Naive thymus-derived CD4-positive, alpha-beta T cell (primary cell): ENCODE measurements at regions of chr7 and their contacts with region 1.

Region 1: DNA sequence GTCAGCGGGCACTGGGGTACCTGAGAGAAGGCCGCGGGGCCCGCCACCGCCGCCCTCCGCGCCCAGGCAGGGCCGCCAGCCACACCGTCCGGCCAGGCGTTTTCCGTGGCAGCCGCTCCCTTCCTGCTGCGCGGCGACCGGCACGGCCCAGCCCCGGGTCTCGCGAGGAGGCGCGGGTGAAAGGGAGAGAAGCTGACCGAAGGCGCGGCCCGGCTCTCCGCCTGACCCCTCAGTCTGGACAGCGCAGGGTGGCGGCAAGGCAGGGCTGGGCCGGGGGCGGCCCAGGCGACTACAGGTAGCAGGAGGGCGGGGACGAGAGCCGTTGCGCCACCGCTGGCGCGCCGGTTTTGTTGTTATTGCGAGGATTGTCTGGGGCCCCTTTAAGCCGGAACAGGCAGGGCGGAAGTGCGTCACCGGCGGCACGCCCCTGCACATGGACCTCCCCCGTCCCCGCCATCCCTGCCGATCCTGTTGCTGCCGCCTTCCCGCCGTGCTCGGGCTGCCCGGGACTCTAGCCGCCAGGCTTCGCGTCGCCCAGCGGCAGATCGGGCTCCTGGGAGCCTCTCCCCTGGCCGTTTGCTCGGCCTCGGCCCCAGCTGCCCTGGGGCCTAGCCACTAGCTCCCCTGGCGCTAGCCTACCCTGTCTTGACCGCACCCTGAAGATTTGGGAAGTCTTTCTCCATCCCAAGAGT is at the start of gene HERPUD2:
- DNase-seq: peak; percentile 89 to 94 (median 93)
- ATAC-seq: peak; percentile 92
- H3K4me3 ChIP-seq: peak within 1 kb of the TSS; percentile 92
- H3K4me3 Mint-ChIP-seq: peak within 1 kb of the TSS; percentile 88 to 99 (median 97)
- H3K27ac ChIP-seq: peak within 1 kb of the TSS; percentile 98
- H3K27ac Mint-ChIP-seq: peak within 1 kb of the TSS; percentile 93 to 100 (median 98)
- H3K4me1 ChIP-seq: peaks cover 16 to 18% of the 10 kb centered on the region in 2 donors
- H3K4me1 Mint-ChIP-seq: peaks cover 47 to 62% (median 57%) of the 10 kb centered on the region in 7 donors
- H3K27me3 ChIP-seq: no peaks in the 10 kb centered on the region
- H3K27me3 Mint-ChIP-seq: no peaks in the 10 kb centered on the region
- total RNA-seq, gene HERPUD2: 38.1 to 92.6 (median 62.4) TPM

Region 2: GRCh38 chr7:35003679-35004303 is 691.1 kb before region 1 on chr7:
- CTCF ChIA-PET with region 1: no interaction called
- POLR2A ChIA-PET with region 1: no interaction called
- intact Hi-C with region 1: no loop called
- DNase-seq: no peak
- ATAC-seq: no peak
- H3K4me3 ChIP-seq: no peak overlapping the region
- H3K4me3 Mint-ChIP-seq: no peak overlapping the region
- H3K27ac ChIP-seq: no peak overlapping the region
- H3K27ac Mint-ChIP-seq: no peak overlapping the region
- H3K4me1 ChIP-seq: no peaks in the 10 kb centered on the region
- H3K4me1 Mint-ChIP-seq: no peaks in the 10 kb centered on the region
- H3K27me3 ChIP-seq: no peaks in the 10 kb centered on the region
- H3K27me3 Mint-ChIP-seq: no peaks in the 10 kb centered on the region

Region 3: DNA sequence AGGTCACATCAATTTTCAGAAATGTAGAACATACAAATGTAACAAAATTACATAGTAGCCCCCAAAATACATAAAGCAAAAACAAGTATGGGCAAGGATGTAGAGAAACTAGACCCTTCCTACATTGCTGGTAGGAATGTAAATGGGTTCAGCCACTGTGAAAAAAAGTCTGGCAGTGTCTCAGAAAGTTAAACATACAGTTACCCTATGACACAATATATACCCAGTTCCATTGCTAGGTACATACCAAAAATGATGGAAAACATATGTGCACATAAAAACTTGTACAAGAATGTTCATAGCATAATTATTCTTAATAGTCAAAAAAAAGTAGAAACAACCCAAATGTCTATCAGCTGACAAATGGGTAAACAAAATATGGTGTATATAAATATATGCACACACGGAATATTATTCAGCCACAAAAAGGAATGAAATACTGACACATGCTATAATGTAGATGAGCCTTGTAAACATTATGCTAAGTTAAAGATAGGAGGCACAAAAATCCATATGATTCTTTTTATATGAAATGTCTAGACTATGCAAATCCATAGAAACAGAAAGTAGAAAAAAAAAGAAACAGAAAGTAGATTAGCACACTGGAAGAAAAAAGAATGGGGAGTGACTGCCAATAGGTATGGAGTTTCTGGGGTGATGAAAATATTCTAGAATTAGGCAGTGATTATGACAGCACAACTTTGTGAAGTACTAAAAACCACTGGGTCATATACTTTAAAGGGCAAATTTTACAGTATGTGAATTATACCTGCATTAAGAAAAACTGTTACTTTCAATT is 13.5 kb before region 1 on chr7:
- CTCF ChIA-PET with region 1: no interaction called
- POLR2A ChIA-PET with region 1: interaction called, 6 read pairs
- intact Hi-C with region 1: loop called (anchors 1 to 2 kb)
- DNase-seq: no peak
- ATAC-seq: no peak
- H3K4me3 ChIP-seq: no peak overlapping the region
- H3K4me3 Mint-ChIP-seq: peak overlapping the region in 8 of 10 donors; percentile 0 to 41 (median 21)
- H3K27ac ChIP-seq: no peak overlapping the region
- H3K27ac Mint-ChIP-seq: peak overlapping the region in 1 of 9 donors; percentile 34
- H3K4me1 ChIP-seq: peaks cover 22 to 27% of the 10 kb centered on the region in 2 donors
- H3K4me1 Mint-ChIP-seq: peaks cover 46 to 82% (median 74%) of the 10 kb centered on the region in 7 donors
- H3K27me3 ChIP-seq: no peaks in the 10 kb centered on the region
- H3K27me3 Mint-ChIP-seq: no peaks in the 10 kb centered on the region

Region 4: GRCh38 chr7:35729061-35729783 is 34.3 kb after region 1 on chr7:
- CTCF ChIA-PET with region 1: interaction called, 4 read pairs
- POLR2A ChIA-PET with region 1: interaction called, 6 read pairs
- intact Hi-C with region 1: loop called (anchors 1 to 2 kb)
- DNase-seq: peak in 1 of 9 donors; percentile 37
- ATAC-seq: peak; percentile 79
- H3K4me3 ChIP-seq: no peak overlapping the region
- H3K4me3 Mint-ChIP-seq: peak overlapping the region in 2 of 10 donors; percentile 21 to 53
- H3K27ac ChIP-seq: no peak overlapping the region
- H3K27ac Mint-ChIP-seq: peak overlapping the region in 4 of 9 donors; percentile 26 to 73 (median 45)
- H3K4me1 ChIP-seq: peaks cover 26 to 55% of the 10 kb centered on the region in 2 donors
- H3K4me1 Mint-ChIP-seq: peaks cover 23 to 54% (median 47%) of the 10 kb centered on the region in 7 donors
- H3K27me3 ChIP-seq: no peaks in the 10 kb centered on the region
- H3K27me3 Mint-ChIP-seq: peaks cover 0 to 19% (median 0%) of the 10 kb centered on the region in 5 donors

Region 5: DNA sequence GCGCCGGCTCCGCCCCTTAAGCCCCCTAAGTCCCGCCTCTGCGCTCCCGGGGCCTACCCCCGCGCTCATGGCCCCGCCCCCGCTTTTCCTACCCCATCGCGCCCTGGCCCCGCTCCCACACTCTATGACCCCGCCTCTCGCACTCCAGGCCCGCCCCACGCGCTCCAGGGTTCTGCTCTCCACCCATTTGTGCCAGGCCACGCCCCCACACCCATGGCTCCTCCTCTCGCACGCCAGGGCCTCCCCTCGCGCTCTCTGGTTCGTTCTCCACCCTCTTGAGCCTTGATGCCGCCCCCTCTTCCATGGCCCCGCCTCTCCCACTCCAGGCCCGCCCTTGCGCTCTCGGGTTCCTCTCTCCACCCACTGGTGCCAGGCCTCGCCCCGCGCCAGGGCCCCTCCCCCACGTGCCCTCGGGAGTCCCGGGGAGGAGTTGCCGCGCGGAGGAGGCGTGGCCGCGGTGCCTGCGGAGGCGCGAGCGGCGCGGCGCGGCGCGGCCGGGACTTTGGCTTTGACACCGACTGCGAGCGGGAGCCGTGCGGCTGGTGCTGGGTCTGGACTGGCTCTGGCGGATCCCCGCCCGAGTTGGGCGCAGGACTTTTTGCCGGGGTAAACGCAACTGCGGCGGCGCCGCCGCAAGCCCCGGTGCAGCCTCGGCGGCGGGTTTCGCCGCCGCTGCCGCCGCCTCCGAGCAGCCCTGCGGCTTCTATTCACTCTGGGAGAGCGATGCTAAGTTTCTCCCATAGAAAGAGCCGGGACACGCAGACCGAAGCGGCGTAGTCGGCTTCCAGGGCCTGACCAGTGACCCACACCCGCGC is 458.0 kb after region 1 on chr7 and contains the start of gene EEPD1:
- CTCF ChIA-PET with region 1: no interaction called
- POLR2A ChIA-PET with region 1: no interaction called
- intact Hi-C with region 1: loop called (anchors 1 kb)
- DNase-seq: peak; percentile 99 to 100 (median 100)
- ATAC-seq: peak; percentile 96
- H3K4me3 ChIP-seq: peak within 1 kb of the TSS; percentile 72
- H3K4me3 Mint-ChIP-seq: peak within 1 kb of the TSS; percentile 70 to 93 (median 84)
- H3K27ac ChIP-seq: peak within 1 kb of the TSS; percentile 73
- H3K27ac Mint-ChIP-seq: peak within 1 kb of the TSS in 8 of 9 donors; percentile 10 to 87 (median 74)
- H3K4me1 ChIP-seq: peaks cover 7 to 16% of the 10 kb centered on the region in 2 donors
- H3K4me1 Mint-ChIP-seq: peaks cover 12 to 31% (median 24%) of the 10 kb centered on the region in 7 donors
- H3K27me3 ChIP-seq: no peaks in the 10 kb centered on the region
- H3K27me3 Mint-ChIP-seq: peaks cover 0 to 21% (median 0%) of the 10 kb centered on the region in 5 donors
- total RNA-seq, gene EEPD1: 2.2 to 13.2 (median 3.7) TPM

Region 6: DNA sequence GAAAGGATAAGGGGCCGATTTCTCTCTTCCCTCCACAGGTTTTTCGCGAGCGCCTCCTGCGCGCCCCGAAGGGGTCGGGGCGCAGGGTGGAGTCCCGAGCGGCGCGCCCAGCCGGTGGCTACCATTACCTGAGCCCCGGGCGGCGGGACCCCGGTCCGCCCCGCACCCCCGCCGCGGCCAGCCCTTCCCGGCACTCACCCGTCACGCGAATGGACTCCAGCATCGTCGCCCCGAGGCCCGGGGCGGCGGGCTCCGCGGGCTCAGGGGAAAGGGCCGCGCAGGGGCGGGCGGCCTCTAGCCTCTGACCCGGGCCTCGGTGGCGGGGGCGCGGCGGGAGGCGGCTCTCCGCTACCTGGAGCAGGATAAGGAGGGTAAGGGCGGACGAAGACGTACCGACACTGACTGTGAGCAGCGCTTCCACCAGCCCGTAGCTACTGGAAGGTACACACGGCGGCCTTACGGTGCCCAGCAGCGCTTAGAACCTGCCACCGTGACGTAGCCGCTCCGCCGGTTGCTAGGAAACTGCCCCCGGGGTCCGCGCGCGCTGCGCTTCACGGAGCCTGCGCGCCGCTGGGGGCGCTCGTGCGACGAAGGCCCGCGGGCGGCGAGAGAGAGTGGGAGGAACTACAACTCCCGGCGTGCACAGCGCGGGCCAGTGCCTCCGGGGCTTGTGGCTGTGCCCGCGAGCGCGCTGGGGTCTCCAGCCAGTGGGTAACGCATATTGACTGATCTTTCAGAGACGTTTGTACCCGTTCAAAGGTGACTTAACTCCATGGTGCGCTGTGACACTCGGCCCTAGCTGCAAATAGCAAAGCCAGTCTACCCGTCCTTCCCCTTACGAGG is 672.0 kb after region 1 on chr7:
- CTCF ChIA-PET with region 1: no interaction called
- POLR2A ChIA-PET with region 1: no interaction called
- intact Hi-C with region 1: loop called (anchors 2 to 10 kb)
- DNase-seq: peak; percentile 84 to 92 (median 91)
- ATAC-seq: peak; percentile 98
- H3K4me3 ChIP-seq: peak overlapping the region; percentile 76
- H3K4me3 Mint-ChIP-seq: peak overlapping the region; percentile 80 to 97 (median 93)
- H3K27ac ChIP-seq: peak overlapping the region; percentile 70
- H3K27ac Mint-ChIP-seq: peak overlapping the region in 8 of 9 donors; percentile 51 to 94 (median 82)
- H3K4me1 ChIP-seq: peaks cover 0 to 5% of the 10 kb centered on the region in 2 donors
- H3K4me1 Mint-ChIP-seq: peaks cover 0 to 8% (median 5%) of the 10 kb centered on the region in 7 donors
- H3K27me3 ChIP-seq: no peaks in the 10 kb centered on the region
- H3K27me3 Mint-ChIP-seq: peaks cover 0 to 57% (median 0%) of the 10 kb centered on the region in 5 donors

Region 7: DNA sequence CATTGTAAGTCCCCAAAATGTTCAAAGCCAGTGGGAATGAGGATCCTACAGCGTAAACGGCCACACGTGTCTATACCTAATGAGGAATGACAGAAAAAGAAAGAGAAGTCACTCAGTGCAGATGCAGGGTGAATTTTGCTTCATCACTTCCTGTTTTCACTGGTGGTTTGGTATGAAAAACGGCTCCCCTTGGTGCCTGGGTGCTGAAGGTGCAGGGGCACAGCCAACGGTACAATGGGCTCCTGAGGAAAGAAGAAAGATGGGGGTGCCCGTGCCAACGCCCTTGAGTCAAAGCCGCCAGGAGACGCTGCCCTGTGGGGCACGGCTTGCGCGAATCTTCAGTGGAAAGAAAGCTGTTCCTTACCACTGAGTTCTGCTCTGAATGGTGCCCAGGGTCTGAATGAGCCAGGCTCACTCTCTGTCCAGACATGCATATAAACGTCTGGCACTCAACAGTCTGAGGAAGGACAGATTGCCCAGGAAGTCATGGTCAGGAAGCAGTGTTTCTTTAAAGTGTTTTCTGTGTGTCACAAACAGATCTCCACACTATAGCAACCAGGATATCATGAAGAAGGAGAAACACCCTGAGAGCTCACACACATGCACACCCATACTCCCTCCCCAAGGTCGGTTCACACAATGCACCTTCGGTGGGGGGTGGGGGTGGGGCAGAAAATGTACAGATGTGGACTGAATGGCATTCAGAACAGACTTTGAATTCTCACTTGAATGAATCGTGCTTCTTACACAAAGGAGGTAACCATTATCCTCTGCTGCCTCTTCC is 1648.0 kb after region 1 on chr7:
- CTCF ChIA-PET with region 1: no interaction called
- POLR2A ChIA-PET with region 1: no interaction called
- intact Hi-C with region 1: loop called in 1 of 2 experiments (anchors 10 kb)
- DNase-seq: peak; percentile 44 to 82 (median 73)
- ATAC-seq: peak; percentile 93
- H3K4me3 ChIP-seq: peak overlapping the region; percentile 55
- H3K4me3 Mint-ChIP-seq: peak overlapping the region; percentile 78 to 98 (median 88)
- H3K27ac ChIP-seq: peak overlapping the region; percentile 69
- H3K27ac Mint-ChIP-seq: peak overlapping the region; percentile 92 to 99 (median 95)
- H3K4me1 ChIP-seq: peaks cover 17 to 51% of the 10 kb centered on the region in 2 donors
- H3K4me1 Mint-ChIP-seq: peaks cover 33 to 93% (median 75%) of the 10 kb centered on the region in 7 donors
- H3K27me3 ChIP-seq: no peaks in the 10 kb centered on the region
- H3K27me3 Mint-ChIP-seq: no peaks in the 10 kb centered on the region